GM10248 (cell line): ENCODE measurements at regions of chr6 and their contacts with region 1.

Region 1: DNA sequence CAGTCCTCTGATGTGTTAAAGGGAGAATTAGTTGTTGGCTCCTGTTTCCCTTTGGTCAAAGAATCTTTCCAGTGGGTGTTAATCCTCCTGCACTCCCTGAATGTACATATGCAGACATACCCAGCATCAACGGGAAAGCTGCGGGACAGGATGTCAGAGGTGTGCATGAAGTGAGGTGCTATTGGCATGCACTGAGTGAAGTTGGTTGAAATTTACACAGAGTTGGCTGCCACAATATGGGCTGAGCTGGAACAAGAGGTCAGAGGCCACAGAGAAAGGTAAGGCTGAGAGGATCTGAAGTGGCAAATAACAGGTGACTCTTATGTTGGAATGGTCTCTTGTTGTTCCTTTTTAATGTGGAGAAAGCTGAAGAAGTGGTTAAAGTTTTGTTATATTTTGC is 82.7 kb upstream of the AKIRIN2 start:
- DNase-seq: no peak
- CTCF ChIP-seq: no peak

Region 2: GRCh38 chr6:87705070-87705691 is 79.5 kb before region 1 on chr6:
- CTCF ChIA-PET with region 1: no interaction called
- POLR2A ChIA-PET with region 1: no interaction called
- DNase-seq: peak; percentile 74
- CTCF ChIP-seq: no peak

Region 3: DNA sequence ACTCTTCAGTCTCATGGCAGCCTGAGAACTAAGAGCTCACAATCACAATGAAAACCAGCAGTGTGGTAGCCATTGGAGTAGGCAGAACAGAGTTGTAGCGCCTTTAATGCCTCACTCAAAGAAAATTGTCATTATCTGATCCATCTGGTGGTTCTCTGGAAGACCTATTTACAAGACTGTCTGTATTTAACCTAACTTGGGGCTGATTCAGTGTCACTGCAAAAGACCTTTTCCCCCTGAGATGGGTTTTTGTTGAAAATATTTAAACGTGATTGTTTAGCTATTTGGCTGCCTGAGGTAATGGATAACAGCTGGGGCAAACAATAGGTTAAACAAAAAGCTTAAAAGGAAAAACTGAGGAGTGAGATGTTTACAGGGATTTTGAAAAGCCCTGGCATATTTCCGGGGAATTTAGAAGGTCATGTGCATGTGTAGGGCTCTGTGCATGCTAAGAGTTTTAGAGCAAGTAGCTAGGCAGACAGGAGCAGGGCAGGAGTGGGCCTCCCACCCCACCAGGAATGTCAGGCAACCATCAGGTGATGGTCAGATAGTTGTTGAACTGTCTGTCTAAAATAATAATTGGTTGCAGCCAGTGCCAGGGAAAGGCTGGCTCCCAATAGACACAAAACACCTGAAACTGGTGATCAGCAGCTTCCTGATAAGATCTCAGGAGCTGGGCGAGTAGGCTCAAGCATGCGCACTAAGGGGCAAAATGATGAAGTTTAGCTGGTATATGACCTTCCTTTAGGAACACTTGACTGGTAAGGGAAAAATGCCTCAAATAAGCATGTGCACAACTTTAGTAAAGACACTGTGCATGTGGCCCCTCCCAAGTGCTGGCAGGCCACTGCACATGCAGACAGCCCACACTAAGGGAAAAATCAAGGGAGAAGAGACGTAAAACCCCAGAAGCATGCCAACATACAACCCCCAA is 11.8 kb before region 1 on chr6:
- CTCF ChIA-PET with region 1: interaction called, 18 read pairs
- POLR2A ChIA-PET with region 1: no interaction called
- DNase-seq: no peak
- CTCF ChIP-seq: no peak